ENCODE measurements at regions of chr13 and their contacts with region 1.

Region 1: GRCh38 chr13:97344265-97345175 is 89.4 kb upstream of the RAP2A start:
- DNase-seq: peak; percentile 72
- H3K4me3 Mint-ChIP-seq: no peak overlapping the region
- H3K27ac Mint-ChIP-seq: no peak overlapping the region
- H3K4me1 Mint-ChIP-seq: peaks cover 6% of the 10 kb centered on the region
- H3K27me3 Mint-ChIP-seq: no peaks in the 10 kb centered on the region

Region 2: DNA sequence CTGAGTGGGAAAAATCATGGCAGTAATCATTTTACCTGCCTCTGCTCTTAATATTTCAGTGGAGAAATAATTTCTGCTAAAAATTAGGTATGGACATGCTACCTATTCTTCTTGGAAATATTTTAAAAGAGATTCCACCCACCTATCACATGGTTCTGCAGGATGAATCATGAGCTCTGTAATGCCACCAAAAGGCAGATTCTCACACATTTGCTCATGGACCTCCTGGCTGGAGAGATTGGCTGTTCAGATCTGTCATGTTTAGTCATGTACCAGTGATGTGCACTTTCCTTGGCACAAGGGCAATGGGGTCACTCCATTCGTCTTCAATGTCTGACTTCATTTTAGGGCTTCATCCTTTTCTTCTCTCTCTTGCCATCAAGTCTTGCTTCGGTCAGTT is 224.2 kb before region 1 on chr13:
- CTCF ChIA-PET with region 1: no interaction called
- intact Hi-C with region 1: no loop called
- DNase-seq: no peak
- H3K4me3 Mint-ChIP-seq: no peak overlapping the region
- H3K27ac Mint-ChIP-seq: no peak overlapping the region
- H3K4me1 Mint-ChIP-seq: peaks cover 4% of the 10 kb centered on the region
- H3K27me3 Mint-ChIP-seq: peaks cover 47% of the 10 kb centered on the region

Region 3: DNA sequence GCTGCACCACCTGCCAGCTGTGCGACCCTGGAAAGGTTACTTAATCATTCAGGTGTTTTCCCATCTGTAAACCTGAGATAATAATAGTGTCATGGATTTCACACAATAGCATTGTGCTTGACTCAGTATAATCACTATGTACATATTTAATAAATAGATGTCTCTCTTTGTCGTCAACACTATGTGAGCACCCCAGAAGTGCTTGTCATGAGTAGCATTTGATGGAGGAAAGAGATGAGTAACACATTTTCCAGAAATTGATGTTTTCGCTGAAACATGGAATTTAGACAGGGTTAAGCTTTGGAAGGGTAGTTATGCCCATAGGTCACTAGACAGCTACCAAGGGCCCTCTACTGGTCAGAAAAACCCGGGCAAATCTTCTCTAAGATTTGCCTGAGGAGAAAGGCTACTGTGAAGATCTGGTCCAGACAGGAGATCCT is 131.9 kb before region 1 on chr13:
- CTCF ChIA-PET with region 1: no interaction called
- intact Hi-C with region 1: loop called (anchors 1 kb)
- DNase-seq: peak; percentile 33
- H3K4me3 Mint-ChIP-seq: no peak overlapping the region
- H3K27ac Mint-ChIP-seq: no peak overlapping the region
- H3K4me1 Mint-ChIP-seq: peaks cover 38% of the 10 kb centered on the region
- H3K27me3 Mint-ChIP-seq: no peaks in the 10 kb centered on the region